ENCODE measurements at regions of chr5 and their contacts with region 1.

Region 1: DNA sequence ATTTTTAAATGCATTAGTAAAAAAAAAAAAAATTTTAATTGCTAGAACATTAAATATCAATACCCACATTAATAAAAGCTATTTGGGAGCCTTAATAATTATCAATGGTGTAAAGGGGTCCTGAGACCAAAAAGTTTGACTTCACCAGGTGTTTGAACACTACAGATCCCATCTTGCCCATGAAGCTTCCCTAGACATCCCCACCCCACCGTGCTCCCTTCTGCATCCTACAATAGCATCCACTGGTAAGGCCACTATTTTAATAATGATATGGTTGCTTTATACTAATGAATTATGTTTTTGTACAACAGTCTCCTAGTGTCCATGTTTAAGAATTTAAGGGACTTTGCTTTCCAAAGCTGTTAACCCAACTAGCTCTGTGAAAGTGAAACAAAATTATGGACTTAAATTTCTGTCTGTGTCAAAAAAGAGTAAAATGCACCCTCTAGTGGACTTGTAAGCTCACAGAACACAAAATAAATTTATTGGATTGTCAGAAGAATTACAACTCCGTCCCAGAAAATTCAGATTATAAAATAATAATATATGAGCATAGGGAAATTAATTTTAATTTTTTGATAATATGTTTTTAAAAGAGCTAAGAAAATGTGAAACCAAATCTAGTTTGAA is 76.0 kb downstream of the ARL15 start:
- DNase-seq: peak; percentile 49
- H3K4me3 ChIP-seq: no peak overlapping the region
- H3K27ac ChIP-seq: no peak overlapping the region
- H3K4me1 ChIP-seq: no peaks in the 10 kb centered on the region
- CTCF ChIP-seq: peak; percentile 81

Region 2: GRCh38 chr5:53425598-53426511 is 808.6 kb before region 1 on chr5:
- CTCF ChIA-PET with region 1: no interaction called
- POLR2A ChIA-PET with region 1: no interaction called
- intact Hi-C with region 1: loop called (anchors 5 kb)
- DNase-seq: peak; percentile 40
- H3K4me3 ChIP-seq: no peak overlapping the region
- H3K27ac ChIP-seq: no peak overlapping the region
- H3K4me1 ChIP-seq: no peaks in the 10 kb centered on the region
- CTCF ChIP-seq: peak; percentile 73